CD4-positive, alpha-beta memory T cell (primary cell): ENCODE measurements at regions of chr17 and their contacts with region 1.

Region 1: GRCh38 chr17:76714822-76715495 is 4.2 kb upstream of the MXRA7 start:
- DNase-seq: peak; percentile 63 to 75 (median 71)
- H3K4me3 ChIP-seq: no peak overlapping the region
- H3K4me3 Mint-ChIP-seq: peak overlapping the region in 5 of 8 donors; percentile 1 to 33 (median 14)
- H3K27ac ChIP-seq: peak overlapping the region; percentile 53
- H3K27ac Mint-ChIP-seq: peak overlapping the region; percentile 72 to 94 (median 87)
- H3K4me1 ChIP-seq: peaks cover 39% of the 10 kb centered on the region
- H3K4me1 Mint-ChIP-seq: peaks cover 24 to 46% (median 35%) of the 10 kb centered on the region in 4 donors
- H3K27me3 ChIP-seq: no peaks in the 10 kb centered on the region
- H3K27me3 Mint-ChIP-seq: no peaks in the 10 kb centered on the region

Region 2: DNA sequence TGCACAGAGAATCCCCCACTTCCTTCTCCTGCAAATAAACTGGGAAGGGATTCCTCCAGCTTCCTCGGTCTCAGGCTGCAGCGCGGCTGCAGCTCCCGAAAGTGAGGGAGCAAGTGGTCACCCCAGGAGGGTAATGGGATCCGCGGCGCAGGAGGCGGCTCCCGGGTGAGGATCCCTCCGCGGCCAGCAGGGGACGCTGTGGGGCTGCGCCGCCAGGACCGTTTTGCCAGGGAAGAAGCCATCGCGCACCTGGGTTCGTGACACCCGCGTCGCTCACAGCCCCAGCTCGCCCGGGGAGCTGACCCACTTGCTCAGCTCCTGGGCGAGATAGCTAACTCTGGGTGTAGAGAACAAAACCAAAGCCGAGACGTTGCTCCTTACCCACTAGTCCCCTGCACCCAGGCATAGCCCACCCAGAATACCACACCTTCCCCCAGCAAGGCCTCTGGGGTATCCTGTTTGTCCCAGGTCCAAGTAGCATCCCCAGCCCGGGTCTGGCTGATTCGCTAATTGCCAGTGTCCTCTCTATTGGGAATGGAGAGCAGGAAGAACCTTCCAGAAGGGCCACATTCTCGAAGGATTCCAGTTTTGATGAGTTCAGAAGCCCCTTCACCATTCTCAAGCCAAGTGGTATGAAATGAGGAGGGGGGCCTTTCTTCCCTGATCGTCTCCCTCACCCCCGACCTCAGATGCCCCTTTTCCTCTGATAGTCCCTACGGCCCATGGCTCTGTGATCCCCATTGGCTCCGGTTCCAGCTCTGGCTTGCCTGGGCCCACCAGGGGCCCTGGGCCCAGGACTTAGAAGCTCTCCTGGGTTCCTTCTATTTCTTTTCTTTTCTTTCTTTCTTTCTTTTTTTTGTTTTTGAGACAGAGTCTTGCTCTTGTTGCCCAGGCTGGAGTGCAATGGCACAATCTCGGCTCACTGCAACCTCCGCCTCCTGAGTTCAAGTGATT is 191.6 kb before region 1 on chr17:
- CTCF ChIA-PET with region 1: interaction called, 35 read pairs
- POLR2A ChIA-PET with region 1: interaction called, 8 read pairs
- intact Hi-C with region 1: loop called (anchors 1 kb)
- DNase-seq: peak; percentile 67 to 84 (median 78)
- H3K4me3 ChIP-seq: no peak overlapping the region
- H3K4me3 Mint-ChIP-seq: peak overlapping the region in 6 of 8 donors; percentile 32 to 79 (median 64)
- H3K27ac ChIP-seq: no peak overlapping the region
- H3K27ac Mint-ChIP-seq: peak overlapping the region; percentile 58 to 97 (median 88)
- H3K4me1 ChIP-seq: peaks cover 27% of the 10 kb centered on the region
- H3K4me1 Mint-ChIP-seq: peaks cover 15 to 51% (median 27%) of the 10 kb centered on the region in 4 donors
- H3K27me3 ChIP-seq: no peaks in the 10 kb centered on the region
- H3K27me3 Mint-ChIP-seq: no peaks in the 10 kb centered on the region

Region 3: GRCh38 chr17:76562734-76563148 is 152.2 kb before region 1 on chr17:
- CTCF ChIA-PET with region 1: interaction called, 13 read pairs
- POLR2A ChIA-PET with region 1: interaction called, 14 read pairs
- intact Hi-C with region 1: loop called (anchors 1 kb)
- DNase-seq: no peak
- H3K4me3 ChIP-seq: no peak overlapping the region
- H3K4me3 Mint-ChIP-seq: peak overlapping the region; percentile 43 to 84 (median 56)
- H3K27ac ChIP-seq: peak overlapping the region; percentile 32
- H3K27ac Mint-ChIP-seq: peak overlapping the region; percentile 85 to 100 (median 87)
- H3K4me1 ChIP-seq: peaks cover 50% of the 10 kb centered on the region
- H3K4me1 Mint-ChIP-seq: peaks cover 44 to 86% (median 61%) of the 10 kb centered on the region in 4 donors
- H3K27me3 ChIP-seq: no peaks in the 10 kb centered on the region
- H3K27me3 Mint-ChIP-seq: no peaks in the 10 kb centered on the region

Region 4: GRCh38 chr17:76645481-76645880 is 69.5 kb before region 1 on chr17:
- CTCF ChIA-PET with region 1: no interaction called
- POLR2A ChIA-PET with region 1: no interaction called
- intact Hi-C with region 1: no loop called
- DNase-seq: no peak
- H3K4me3 ChIP-seq: no peak overlapping the region
- H3K4me3 Mint-ChIP-seq: peak overlapping the region in 2 of 8 donors; percentile 30 to 44
- H3K27ac ChIP-seq: no peak overlapping the region
- H3K27ac Mint-ChIP-seq: peak overlapping the region in 3 of 7 donors; percentile 17 to 88 (median 76)
- H3K4me1 ChIP-seq: peaks cover 35% of the 10 kb centered on the region
- H3K4me1 Mint-ChIP-seq: peaks cover 13 to 33% (median 27%) of the 10 kb centered on the region in 4 donors
- H3K27me3 ChIP-seq: no peaks in the 10 kb centered on the region
- H3K27me3 Mint-ChIP-seq: peaks cover 0 to 2% of the 10 kb centered on the region in 2 donors

Region 5: GRCh38 chr17:76696763-76697701 is 17.9 kb before region 1 on chr17:
- CTCF ChIA-PET with region 1: interaction called, 12 read pairs
- POLR2A ChIA-PET with region 1: no interaction called
- intact Hi-C with region 1: no loop called
- DNase-seq: no peak
- H3K4me3 ChIP-seq: no peak overlapping the region
- H3K4me3 Mint-ChIP-seq: no peak overlapping the region
- H3K27ac ChIP-seq: no peak overlapping the region
- H3K27ac Mint-ChIP-seq: peak overlapping the region in 1 of 7 donors; percentile 76
- H3K4me1 ChIP-seq: peaks cover 5% of the 10 kb centered on the region
- H3K4me1 Mint-ChIP-seq: peaks cover 0 to 38% (median 5%) of the 10 kb centered on the region in 4 donors
- H3K27me3 ChIP-seq: no peaks in the 10 kb centered on the region
- H3K27me3 Mint-ChIP-seq: no peaks in the 10 kb centered on the region

Region 6: GRCh38 chr17:76704805-76705204 is 10.2 kb before region 1 on chr17:
- CTCF ChIA-PET with region 1: interaction called, 13 read pairs
- POLR2A ChIA-PET with region 1: no interaction called
- intact Hi-C with region 1: no loop called
- DNase-seq: no peak
- H3K4me3 ChIP-seq: no peak overlapping the region
- H3K4me3 Mint-ChIP-seq: no peak overlapping the region
- H3K27ac ChIP-seq: no peak overlapping the region
- H3K27ac Mint-ChIP-seq: no peak overlapping the region
- H3K4me1 ChIP-seq: peaks cover 5% of the 10 kb centered on the region
- H3K4me1 Mint-ChIP-seq: peaks cover 0 to 25% (median 4%) of the 10 kb centered on the region in 4 donors
- H3K27me3 ChIP-seq: no peaks in the 10 kb centered on the region
- H3K27me3 Mint-ChIP-seq: no peaks in the 10 kb centered on the region

Region 7: GRCh38 chr17:76737082-76737675 is 22.2 kb after region 1 on chr17 and contains the start of gene SRSF2:
- CTCF ChIA-PET with region 1: interaction called, 3 read pairs
- POLR2A ChIA-PET with region 1: interaction called, 14 read pairs
- intact Hi-C with region 1: no loop called
- DNase-seq: peak; percentile 99 to 100 (median 100)
- H3K4me3 ChIP-seq: peak within 1 kb of the TSS; percentile 76 to 93
- H3K4me3 Mint-ChIP-seq: peak within 1 kb of the TSS; percentile 92 to 98 (median 96)
- H3K27ac ChIP-seq: peak within 1 kb of the TSS; percentile 95
- H3K27ac Mint-ChIP-seq: peak within 1 kb of the TSS; percentile 98 to 100 (median 99)
- H3K4me1 ChIP-seq: peaks cover 58% of the 10 kb centered on the region
- H3K4me1 Mint-ChIP-seq: peaks cover 38 to 66% (median 49%) of the 10 kb centered on the region in 4 donors
- H3K27me3 ChIP-seq: no peaks in the 10 kb centered on the region
- H3K27me3 Mint-ChIP-seq: no peaks in the 10 kb centered on the region
- total RNA-seq, gene SRSF2: 327 to 330 TPM

Region 8: GRCh38 chr17:76834870-76835269 is 119.9 kb after region 1 on chr17:
- CTCF ChIA-PET with region 1: no interaction called
- POLR2A ChIA-PET with region 1: no interaction called
- intact Hi-C with region 1: loop called (anchors 5 kb)
- DNase-seq: no peak
- H3K4me3 ChIP-seq: no peak overlapping the region
- H3K4me3 Mint-ChIP-seq: no peak overlapping the region
- H3K27ac ChIP-seq: no peak overlapping the region
- H3K27ac Mint-ChIP-seq: no peak overlapping the region
- H3K4me1 ChIP-seq: peaks cover 7% of the 10 kb centered on the region
- H3K4me1 Mint-ChIP-seq: peaks cover 2 to 5% (median 5%) of the 10 kb centered on the region in 4 donors
- H3K27me3 ChIP-seq: no peaks in the 10 kb centered on the region
- H3K27me3 Mint-ChIP-seq: peaks cover 4 to 9% of the 10 kb centered on the region in 2 donors